ENCODE measurements at regions of chr19 and their contacts with region 1.

Region 1: GRCh38 chr19:11014403-11014911 is 53.6 kb downstream of the SMARCA4 start:
- H3K4me3 Mint-ChIP-seq: no peak overlapping the region
- H3K27ac Mint-ChIP-seq: no peak overlapping the region
- H3K4me1 Mint-ChIP-seq: no peaks in the 10 kb centered on the region
- H3K27me3 Mint-ChIP-seq: no peaks in the 10 kb centered on the region

Region 2: DNA sequence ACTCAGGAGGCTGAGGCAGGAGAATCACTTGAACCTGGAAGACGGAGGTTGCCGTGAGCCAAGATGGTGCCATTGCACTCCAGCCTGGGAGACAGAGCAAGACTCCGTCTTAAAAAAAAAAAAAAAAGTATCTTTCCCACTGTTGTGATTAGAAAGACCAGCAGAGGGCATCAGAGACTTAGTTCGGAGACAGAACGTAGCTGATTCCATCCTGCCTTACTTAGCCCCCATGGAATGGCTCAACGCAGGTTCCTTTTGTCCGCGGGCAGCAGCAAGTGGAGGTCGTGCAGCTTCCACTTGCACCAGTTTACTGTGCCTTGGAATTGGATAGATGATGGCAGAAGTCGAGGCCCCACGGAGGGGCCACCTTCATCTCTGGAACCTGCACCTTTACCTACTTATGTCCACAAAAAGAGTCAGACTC is 77.8 kb before region 1 on chr19:
- intact Hi-C with region 1: loop called (anchors 5 kb)
- H3K4me3 Mint-ChIP-seq: no peak overlapping the region
- H3K27ac Mint-ChIP-seq: no peak overlapping the region
- H3K4me1 Mint-ChIP-seq: peaks cover 5% of the 10 kb centered on the region
- H3K27me3 Mint-ChIP-seq: no peaks in the 10 kb centered on the region

Measured in dendritic cell treated with granulocyte-macrophage colony-stimulating factor and Interleukin-4, amounts not matched to agents 40 ng/mL and 50 ng/mL, for 4 days (primary cell).